GM13976 (cell line): ENCODE measurements at regions of chr6 and their contacts with region 1.

Region 1: GRCh38 chr6:153312641-153313040 is 181.6 kb upstream of the RGS17 start:
- DNase-seq: no peak
- CTCF ChIP-seq: peak; percentile 53

Region 2: GRCh38 chr6:153032255-153032882 is 280.3 kb before region 1 on chr6:
- in situ Hi-C with region 1: loop called (anchors 10 kb)
- DNase-seq: no peak
- CTCF ChIP-seq: no peak

Region 3: GRCh38 chr6:153062516-153062915 is 250.1 kb before region 1 on chr6:
- in situ Hi-C with region 1: no loop called
- DNase-seq: no peak
- CTCF ChIP-seq: no peak